ENCODE measurements at regions of chr1 and their contacts with region 1.

Region 1: GRCh38 chr1:93909146-93910050 is at the start of gene GCLM:
- DNase-seq: peak; percentile 69 to 95 (median 84)
- ATAC-seq: peak; percentile 91 to 94 (median 92)
- H3K4me3 ChIP-seq: peak within 1 kb of the TSS; percentile 54 to 63
- H3K4me3 Mint-ChIP-seq: peak within 1 kb of the TSS; percentile 86 to 87 (median 87)
- H3K27ac ChIP-seq: peak within 1 kb of the TSS; percentile 61
- H3K27ac Mint-ChIP-seq: peak within 1 kb of the TSS; percentile 87 to 92
- H3K4me1 ChIP-seq: peaks cover 5 to 7% of the 10 kb centered on the region in 2 experiments
- H3K4me1 Mint-ChIP-seq: peaks cover 36 to 42% (median 39%) of the 10 kb centered on the region in 3 donors
- H3K27me3 ChIP-seq: no peaks in the 10 kb centered on the region
- H3K27me3 Mint-ChIP-seq: peaks cover 2 to 4% of the 10 kb centered on the region in 2 donors
- total RNA-seq, gene GCLM: 8.7 to 20.6 (median 17.9) TPM

Region 2: GRCh38 chr1:93345633-93346420 is 563.6 kb before region 1 on chr1 and contains the start of gene DR1:
- CTCF ChIA-PET with region 1: no interaction called
- POLR2A ChIA-PET with region 1: interaction called in 1 of 2 experiments, 15 read pairs
- DNase-seq: peak; percentile 75 to 93 (median 85)
- ATAC-seq: peak; percentile 84 to 87 (median 86)
- H3K4me3 ChIP-seq: peak within 1 kb of the TSS; percentile 82 to 99
- H3K4me3 Mint-ChIP-seq: peak within 1 kb of the TSS; percentile 94 to 98 (median 97)
- H3K27ac ChIP-seq: peak within 1 kb of the TSS; percentile 82
- H3K27ac Mint-ChIP-seq: peak within 1 kb of the TSS; percentile 94 to 96
- H3K4me1 ChIP-seq: peaks cover 7 to 39% of the 10 kb centered on the region in 2 experiments
- H3K4me1 Mint-ChIP-seq: peaks cover 40 to 43% (median 41%) of the 10 kb centered on the region in 3 donors
- H3K27me3 ChIP-seq: no peaks in the 10 kb centered on the region
- H3K27me3 Mint-ChIP-seq: no peaks in the 10 kb centered on the region
- total RNA-seq, gene DR1: 58.8 to 72.3 (median 65.1) TPM

Region 3: GRCh38 chr1:93447516-93448291 is 461.7 kb before region 1 on chr1 and contains the start of gene FNBP1L:
- CTCF ChIA-PET with region 1: interaction called in 1 of 2 experiments, 4 read pairs
- POLR2A ChIA-PET with region 1: interaction called in 1 of 2 experiments, 12 read pairs
- DNase-seq: peak in 34 of 35 experiments; percentile 3 to 70 (median 44)
- ATAC-seq: peak; percentile 79 to 92 (median 86)
- H3K4me3 ChIP-seq: peak within 1 kb of the TSS; percentile 61 to 92
- H3K4me3 Mint-ChIP-seq: peak within 1 kb of the TSS; percentile 91 to 95 (median 92)
- H3K27ac ChIP-seq: no peak within 1 kb of the TSS
- H3K27ac Mint-ChIP-seq: peak within 1 kb of the TSS; percentile 66 to 69
- H3K4me1 ChIP-seq: peaks cover 8 to 22% of the 10 kb centered on the region in 2 experiments
- H3K4me1 Mint-ChIP-seq: peaks cover 15 to 24% (median 20%) of the 10 kb centered on the region in 3 donors
- H3K27me3 ChIP-seq: peaks cover 2 to 35% of the 10 kb centered on the region in 2 experiments
- H3K27me3 Mint-ChIP-seq: peaks cover 27 to 46% of the 10 kb centered on the region in 2 donors
- total RNA-seq, gene FNBP1L: 1.2 to 3.2 (median 1.6) TPM

Region 4: GRCh38 chr1:93629099-93630059 is 280.0 kb before region 1 on chr1:
- CTCF ChIA-PET with region 1: interaction called, 15 to 20 read pairs
- POLR2A ChIA-PET with region 1: no interaction called
- DNase-seq: peak in 28 of 35 experiments; percentile 9 to 79 (median 32)
- ATAC-seq: peak; percentile 68 to 79 (median 72)
- H3K4me3 ChIP-seq: no peak overlapping the region
- H3K4me3 Mint-ChIP-seq: no peak overlapping the region
- H3K27ac ChIP-seq: no peak overlapping the region
- H3K27ac Mint-ChIP-seq: no peak overlapping the region
- H3K4me1 ChIP-seq: no peaks in the 10 kb centered on the region
- H3K4me1 Mint-ChIP-seq: no peaks in the 10 kb centered on the region
- H3K27me3 ChIP-seq: no peaks in the 10 kb centered on the region
- H3K27me3 Mint-ChIP-seq: no peaks in the 10 kb centered on the region

Region 5: GRCh38 chr1:93846211-93846991 is 63.0 kb before region 1 on chr1:
- CTCF ChIA-PET with region 1: interaction called, 7 to 13 read pairs
- POLR2A ChIA-PET with region 1: interaction called in 1 of 2 experiments, 4 read pairs
- DNase-seq: peak; percentile 73 to 92 (median 82)
- ATAC-seq: peak; percentile 54 to 62 (median 60)
- H3K4me3 ChIP-seq: peak overlapping the region; percentile 82 to 86
- H3K4me3 Mint-ChIP-seq: peak overlapping the region; percentile 85 to 98 (median 88)
- H3K27ac ChIP-seq: peak overlapping the region; percentile 92
- H3K27ac Mint-ChIP-seq: peak overlapping the region; percentile 93 to 95
- H3K4me1 ChIP-seq: peaks cover 6 to 36% of the 10 kb centered on the region in 2 experiments
- H3K4me1 Mint-ChIP-seq: peaks cover 31 to 39% (median 36%) of the 10 kb centered on the region in 3 donors
- H3K27me3 ChIP-seq: no peaks in the 10 kb centered on the region
- H3K27me3 Mint-ChIP-seq: peaks cover 0 to 5% of the 10 kb centered on the region in 2 donors

Region 6: GRCh38 chr1:93878889-93879586 is 30.4 kb before region 1 on chr1 and contains the start of gene DNTTIP2:
- CTCF ChIA-PET with region 1: interaction called, 4 to 11 read pairs
- POLR2A ChIA-PET with region 1: interaction called in 1 of 2 experiments, 4 read pairs
- DNase-seq: peak; percentile 75 to 93 (median 86)
- ATAC-seq: peak; percentile 90 to 93 (median 91)
- H3K4me3 ChIP-seq: peak within 1 kb of the TSS; percentile 88 to 97
- H3K4me3 Mint-ChIP-seq: peak within 1 kb of the TSS; percentile 96 to 98 (median 96)
- H3K27ac ChIP-seq: peak within 1 kb of the TSS; percentile 97
- H3K27ac Mint-ChIP-seq: peak within 1 kb of the TSS; percentile 96 to 99
- H3K4me1 ChIP-seq: peaks cover 12 to 21% of the 10 kb centered on the region in 2 experiments
- H3K4me1 Mint-ChIP-seq: peaks cover 49 to 59% (median 56%) of the 10 kb centered on the region in 3 donors
- H3K27me3 ChIP-seq: no peaks in the 10 kb centered on the region
- H3K27me3 Mint-ChIP-seq: no peaks in the 10 kb centered on the region
- total RNA-seq, gene DNTTIP2: 60.4 to 90.7 (median 69.8) TPM